Transverse colon (tissue), 4 donors: ENCODE measurements at regions of chr1 and their contacts with region 1.

Region 1: GRCh38 chr1:47192458-47193384 is 2.9 kb upstream of the PDZK1IP1 start:
- DNase-seq: peak; percentile 82
- H3K4me3 ChIP-seq: no peak overlapping the region
- H3K27ac ChIP-seq: peak overlapping the region; percentile 60 to 86 (median 66)
- H3K4me1 ChIP-seq: peaks cover 7 to 46% (median 42%) of the 10 kb centered on the region in 4 donors
- H3K27me3 ChIP-seq: peaks cover 6% of the 10 kb centered on the region
- CTCF ChIP-seq: peak; percentile 92 to 96 (median 94)
- EP300 ChIP-seq: no peak
- POLR2A ChIP-seq: peak; percentile 37

Region 2: DNA sequence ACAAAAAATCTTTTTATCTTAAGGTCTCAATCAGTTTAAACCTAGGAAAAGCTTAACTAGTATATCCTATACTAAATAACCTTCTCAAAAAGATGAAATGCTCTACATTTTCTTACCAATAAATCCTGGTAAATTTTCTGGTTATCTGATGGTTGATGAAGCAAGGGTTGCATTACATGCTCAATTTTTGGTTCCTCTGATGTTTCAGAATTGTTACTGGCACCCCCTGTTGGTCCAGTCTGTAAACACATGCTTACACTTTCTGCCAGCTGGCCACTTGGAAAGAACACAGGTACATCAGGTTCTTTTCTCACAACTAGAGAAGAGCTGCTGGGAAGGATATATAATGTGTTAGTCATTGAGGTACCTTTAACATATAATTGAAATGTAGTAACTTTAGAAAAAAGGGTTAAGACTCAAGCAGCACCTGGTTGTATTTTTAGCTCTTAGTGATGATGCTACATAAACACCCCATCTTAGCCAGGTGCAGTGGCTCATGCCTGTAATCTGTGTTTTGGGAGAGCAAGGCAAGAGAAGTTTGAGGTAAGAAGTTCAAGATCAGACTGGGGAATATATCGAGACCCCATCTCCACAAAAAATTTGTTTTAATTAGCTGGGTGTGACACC is 70.2 kb after region 1 on chr1:
- in situ Hi-C with region 1: loop called in 1 of 4 experiments (anchors 10 kb)
- intact Hi-C with region 1: no loop called
- DNase-seq: peak; percentile 53
- H3K4me3 ChIP-seq: no peak overlapping the region
- H3K27ac ChIP-seq: no peak overlapping the region
- H3K4me1 ChIP-seq: no peaks in the 10 kb centered on the region
- H3K27me3 ChIP-seq: no peaks in the 10 kb centered on the region
- CTCF ChIP-seq: peak; percentile 41 to 66 (median 57)
- EP300 ChIP-seq: no peak
- POLR2A ChIP-seq: no peak